Activated CD8-positive, alpha-beta T cell treated with anti-CD3 and anti-CD28 coated beads for 36 hours (primary cell): ENCODE measurements at regions of chr22 and their contacts with region 1.

Region 1: DNA sequence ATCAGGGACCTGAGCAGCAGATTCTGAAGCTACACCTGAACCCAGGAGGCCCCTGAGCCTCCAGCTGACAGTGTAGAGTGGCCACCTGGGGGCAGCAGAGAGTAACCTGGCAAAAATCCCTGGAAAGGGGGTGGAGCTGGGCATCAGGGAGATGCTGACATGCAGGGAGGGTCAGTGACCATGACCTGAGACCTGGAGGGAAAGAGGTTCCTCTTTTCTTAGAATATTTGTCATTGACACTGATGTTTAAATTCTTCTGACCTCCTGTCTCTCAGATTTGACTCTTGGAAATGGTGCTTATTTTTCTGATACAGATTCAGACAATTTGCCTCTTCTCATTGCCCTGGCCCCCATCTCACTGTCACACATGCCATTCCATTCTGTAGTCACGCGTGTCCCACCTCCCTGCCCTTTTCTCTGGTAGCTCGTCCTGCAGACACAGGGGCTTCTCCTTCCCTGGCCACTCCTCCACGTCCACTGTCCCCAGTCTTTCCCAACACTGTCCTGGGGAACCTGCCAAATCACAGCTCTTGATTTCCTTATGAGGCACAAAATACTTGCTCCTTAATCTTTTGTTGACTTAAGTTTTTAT is 117.2 kb upstream of the IGLL5 start:
- DNase-seq: peak; percentile 65
- ATAC-seq: peak; percentile 62
- H3K4me3 Mint-ChIP-seq: no peak overlapping the region
- H3K27ac Mint-ChIP-seq: no peak overlapping the region
- H3K4me1 Mint-ChIP-seq: peaks cover 4% of the 10 kb centered on the region
- H3K27me3 Mint-ChIP-seq: no peaks in the 10 kb centered on the region
- CTCF ChIP-seq: peak; percentile 80

Region 2: GRCh38 chr22:22802339-22802970 is 32.1 kb after region 1 on chr22:
- CTCF ChIA-PET with region 1: interaction called, 10 read pairs
- POLR2A ChIA-PET with region 1: no interaction called
- intact Hi-C with region 1: no loop called
- DNase-seq: peak; percentile 66
- ATAC-seq: peak; percentile 64
- H3K4me3 Mint-ChIP-seq: no peak overlapping the region
- H3K27ac Mint-ChIP-seq: no peak overlapping the region
- H3K4me1 Mint-ChIP-seq: peaks cover 28% of the 10 kb centered on the region
- H3K27me3 Mint-ChIP-seq: no peaks in the 10 kb centered on the region
- CTCF ChIP-seq: peak; percentile 80

Region 3: GRCh38 chr22:23012081-23012622 is 241.8 kb after region 1 on chr22:
- CTCF ChIA-PET with region 1: no interaction called
- POLR2A ChIA-PET with region 1: no interaction called
- intact Hi-C with region 1: no loop called
- DNase-seq: peak; percentile 80
- ATAC-seq: peak; percentile 93
- H3K4me3 Mint-ChIP-seq: no peak overlapping the region
- H3K27ac Mint-ChIP-seq: peak overlapping the region; percentile 55
- H3K4me1 Mint-ChIP-seq: peaks cover 28% of the 10 kb centered on the region
- H3K27me3 Mint-ChIP-seq: peaks cover 41% of the 10 kb centered on the region
- CTCF ChIP-seq: no peak